ENCODE measurements at regions of chr17 and their contacts with region 1.

Region 1: GRCh38 chr17:21705021-21705601 is 12.8 kb downstream of the KCNJ18 start:
- DNase-seq: no peak
- ATAC-seq: no peak
- H3K4me3 ChIP-seq: no peak overlapping the region
- H3K27ac ChIP-seq: no peak overlapping the region
- H3K4me1 ChIP-seq: no peaks in the 10 kb centered on the region
- H3K27me3 ChIP-seq: no peaks in the 10 kb centered on the region
- CTCF ChIP-seq: no peak
- POLR2A ChIP-seq: no peak

Region 2: GRCh38 chr17:21419299-21420239 is 285.5 kb before region 1 on chr17:
- intact Hi-C with region 1: loop called (anchors 5 kb)
- DNase-seq: no peak
- ATAC-seq: no peak
- H3K4me3 ChIP-seq: no peak overlapping the region
- H3K27ac ChIP-seq: no peak overlapping the region
- H3K4me1 ChIP-seq: no peaks in the 10 kb centered on the region
- H3K27me3 ChIP-seq: no peaks in the 10 kb centered on the region
- CTCF ChIP-seq: no peak
- POLR2A ChIP-seq: no peak

Region 3: GRCh38 chr17:21524211-21524591 is 180.9 kb before region 1 on chr17:
- intact Hi-C with region 1: no loop called
- DNase-seq: no peak
- ATAC-seq: no peak
- H3K4me3 ChIP-seq: no peak overlapping the region
- H3K27ac ChIP-seq: no peak overlapping the region
- H3K4me1 ChIP-seq: no peaks in the 10 kb centered on the region
- H3K27me3 ChIP-seq: no peaks in the 10 kb centered on the region
- CTCF ChIP-seq: no peak
- POLR2A ChIP-seq: no peak

Region 4: DNA sequence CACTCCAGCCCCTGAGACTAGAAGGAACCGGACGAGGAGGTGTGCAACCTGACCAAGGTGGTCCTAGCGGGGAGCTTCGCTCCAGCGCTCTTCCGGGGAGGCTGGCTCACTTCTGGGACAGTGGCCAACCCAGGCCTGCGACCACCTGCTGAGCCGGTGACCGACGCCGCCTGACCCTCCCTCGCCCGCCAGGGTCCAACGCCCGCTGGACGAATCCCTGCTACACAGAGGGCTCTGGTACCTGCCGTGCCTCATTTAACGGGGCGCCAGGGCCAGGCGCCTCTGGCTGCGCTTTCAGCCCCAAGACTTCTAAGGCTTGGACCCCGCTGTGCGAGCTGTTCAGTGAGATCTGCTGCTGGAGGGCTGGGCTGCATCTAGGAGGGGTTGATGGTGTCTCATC is 112.3 kb before region 1 on chr17:
- intact Hi-C with region 1: no loop called
- DNase-seq: no peak
- ATAC-seq: no peak
- H3K4me3 ChIP-seq: no peak overlapping the region
- H3K27ac ChIP-seq: no peak overlapping the region
- H3K4me1 ChIP-seq: no peaks in the 10 kb centered on the region
- H3K27me3 ChIP-seq: no peaks in the 10 kb centered on the region
- CTCF ChIP-seq: no peak
- POLR2A ChIP-seq: no peak

Region 5: GRCh38 chr17:21817791-21818364 is 112.8 kb after region 1 on chr17:
- intact Hi-C with region 1: no loop called
- DNase-seq: no peak
- ATAC-seq: no peak
- H3K4me3 ChIP-seq: no peak overlapping the region
- H3K27ac ChIP-seq: no peak overlapping the region
- H3K4me1 ChIP-seq: no peaks in the 10 kb centered on the region
- H3K27me3 ChIP-seq: no peaks in the 10 kb centered on the region
- CTCF ChIP-seq: no peak
- POLR2A ChIP-seq: no peak

Measured in body of pancreas (tissue), 4 donors.